ENCODE measurements at regions of chr9 and their contacts with region 1.

Region 1: DNA sequence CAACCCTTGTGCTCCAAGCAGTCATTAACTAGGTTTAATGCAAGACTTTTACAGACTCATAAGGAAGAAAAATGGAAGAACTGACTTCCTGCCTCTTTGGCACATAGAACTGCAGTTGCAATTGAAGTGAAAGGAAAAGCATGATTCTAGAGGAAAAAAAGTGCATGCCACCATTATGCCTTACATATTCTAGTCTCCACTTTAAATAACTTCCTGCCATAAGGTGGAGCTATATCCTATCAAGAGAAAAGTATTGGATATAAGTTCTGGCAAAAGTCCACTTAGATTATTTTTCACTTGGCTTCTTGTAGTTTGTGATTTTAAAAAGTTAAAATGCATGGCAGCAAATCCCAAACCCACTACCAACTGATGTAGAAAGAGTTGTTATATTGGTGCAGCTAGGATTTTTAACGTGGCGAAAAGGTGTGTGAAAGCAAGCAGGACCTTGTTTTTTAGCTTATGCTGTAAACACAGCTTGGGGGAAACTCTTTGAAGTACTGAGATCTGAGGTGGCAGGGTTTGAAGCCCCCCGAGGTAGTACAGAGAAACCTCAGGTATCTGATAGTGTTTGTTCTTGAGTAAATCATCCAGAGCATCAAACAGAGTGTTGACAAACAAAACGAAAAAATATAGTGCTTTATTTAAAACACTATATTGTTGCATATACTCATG is 117.9 kb downstream of the ANXA1 start:
- DNase-seq: peak; percentile 27
- H3K4me3 ChIP-seq: no peak overlapping the region
- H3K27ac ChIP-seq: no peak overlapping the region
- H3K4me1 ChIP-seq: peaks cover 10% of the 10 kb centered on the region
- H3K27me3 ChIP-seq: no peaks in the 10 kb centered on the region
- CTCF ChIP-seq: peak; percentile 46 to 51

Region 2: GRCh38 chr9:73348471-73348870 is 78.9 kb after region 1 on chr9:
- CTCF ChIA-PET with region 1: no interaction called
- dilution Hi-C with region 1: no loop called
- in situ Hi-C with region 1: no loop called
- intact Hi-C with region 1: no loop called
- DNase-seq: no peak
- H3K4me3 ChIP-seq: no peak overlapping the region
- H3K27ac ChIP-seq: no peak overlapping the region
- H3K4me1 ChIP-seq: no peaks in the 10 kb centered on the region
- H3K27me3 ChIP-seq: no peaks in the 10 kb centered on the region
- CTCF ChIP-seq: no peak

Region 3: GRCh38 chr9:73565833-73566465 is 296.4 kb after region 1 on chr9:
- CTCF ChIA-PET with region 1: interaction called, 3 read pairs
- dilution Hi-C with region 1: no loop called
- in situ Hi-C with region 1: no loop called
- intact Hi-C with region 1: loop called (anchors 1 kb)
- DNase-seq: peak; percentile 54
- H3K4me3 ChIP-seq: no peak overlapping the region
- H3K27ac ChIP-seq: peak overlapping the region; percentile 61
- H3K4me1 ChIP-seq: peaks cover 7% of the 10 kb centered on the region
- H3K27me3 ChIP-seq: no peaks in the 10 kb centered on the region
- CTCF ChIP-seq: peak; percentile 80 to 91

Region 4: DNA sequence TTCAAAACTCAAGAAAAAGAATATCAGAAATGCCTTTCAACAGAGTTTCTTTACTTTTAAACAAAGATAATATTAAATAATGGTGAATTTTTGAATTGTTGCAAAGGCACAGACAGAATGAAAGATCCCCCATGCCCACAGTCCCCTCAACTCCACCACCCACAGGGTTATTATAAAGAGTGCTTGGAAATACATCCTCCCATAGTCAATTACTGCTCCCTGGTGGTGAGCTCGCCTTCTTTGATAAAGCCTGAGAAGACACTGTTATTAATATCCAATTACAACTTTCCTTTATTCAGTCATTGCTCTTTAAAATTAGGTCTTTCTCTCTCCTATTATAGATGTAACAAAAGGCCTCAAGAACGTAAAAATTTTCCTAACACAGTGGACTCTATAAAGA is 737.4 kb after region 1 on chr9:
- CTCF ChIA-PET with region 1: no interaction called
- dilution Hi-C with region 1: no loop called
- in situ Hi-C with region 1: no loop called
- intact Hi-C with region 1: loop called (anchors 10 kb)
- DNase-seq: no peak
- H3K4me3 ChIP-seq: no peak overlapping the region
- H3K27ac ChIP-seq: no peak overlapping the region
- H3K4me1 ChIP-seq: no peaks in the 10 kb centered on the region
- H3K27me3 ChIP-seq: no peaks in the 10 kb centered on the region
- CTCF ChIP-seq: peak in 1 of 2 donors; percentile 50